ENCODE measurements at regions of chr18 and their contacts with region 1.

Region 1: GRCh38 chr18:62974928-62975675 is 259.8 kb downstream of the PHLPP1 start:
- DNase-seq: peak in 1 of 10 donors; percentile 87

Region 2: GRCh38 chr18:62413206-62413605 is 561.9 kb before region 1 on chr18:
- intact Hi-C with region 1: no loop called
- DNase-seq: no peak

Region 3: DNA sequence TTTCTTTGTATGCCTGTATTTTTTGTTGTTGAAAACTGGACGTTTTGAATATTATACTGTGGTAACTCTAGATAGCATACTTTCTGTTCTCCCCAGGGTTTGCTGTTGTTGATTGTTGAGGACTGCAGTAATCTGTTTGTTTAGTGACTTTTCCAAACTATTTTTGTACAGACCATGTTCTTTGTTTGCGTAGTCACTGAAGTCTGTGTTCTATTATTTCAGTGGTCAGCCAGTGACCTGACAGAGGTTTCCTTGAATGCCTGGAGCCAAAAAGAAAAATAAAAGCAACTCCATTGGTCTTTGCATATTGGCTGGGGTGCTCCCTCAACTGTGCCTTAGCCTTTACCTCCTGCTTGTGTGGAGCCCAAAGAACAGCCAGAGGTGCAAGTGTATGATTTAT is 302.5 kb before region 1 on chr18:
- intact Hi-C with region 1: no loop called
- DNase-seq: no peak

Region 4: DNA sequence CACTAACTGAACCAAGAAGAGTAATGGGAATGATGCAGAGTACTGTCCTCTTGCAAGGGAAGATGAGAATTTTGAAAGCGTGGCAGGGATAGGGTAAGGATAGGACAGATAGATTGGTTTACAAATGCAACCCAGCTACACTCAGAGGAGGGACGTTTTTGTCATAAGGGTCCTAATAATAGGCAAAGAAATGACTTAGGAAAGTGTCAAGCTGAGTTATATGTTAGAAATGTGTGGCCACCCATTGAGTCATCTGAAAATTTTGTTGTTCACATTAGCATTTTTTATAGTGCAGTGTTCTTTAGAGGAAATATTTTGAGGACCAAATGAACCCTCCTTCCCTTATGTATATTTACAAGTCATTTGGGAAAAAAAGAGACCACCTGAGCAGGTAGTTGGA is 122.3 kb before region 1 on chr18:
- intact Hi-C with region 1: no loop called
- DNase-seq: no peak

Region 5: GRCh38 chr18:62925031-62925688 is 49.9 kb before region 1 on chr18:
- intact Hi-C with region 1: loop called (anchors 5 kb)
- DNase-seq: no peak

Measured in posterior cingulate gyrus (tissue), 11 donors.